Endothelial cell of umbilical vein (primary cell): ENCODE measurements at regions of chr3 and their contacts with region 1.

Region 1: GRCh38 chr3:177284383-177284881 is 87.2 kb upstream of the TBL1XR1 start:
- DNase-seq: no peak
- H3K4me3 ChIP-seq: no peak overlapping the region
- H3K27ac ChIP-seq: no peak overlapping the region
- H3K4me1 ChIP-seq: no peaks in the 10 kb centered on the region
- H3K27me3 ChIP-seq: no peaks in the 10 kb centered on the region
- CTCF ChIP-seq: no peak
- POLR2A ChIP-seq: no peak

Region 2: GRCh38 chr3:176953106-176954060 is 331.0 kb before region 1 on chr3:
- CTCF ChIA-PET with region 1: no interaction called
- POLR2A ChIA-PET with region 1: no interaction called
- dilution Hi-C with region 1: no loop called
- intact Hi-C with region 1: loop called (anchors 5 kb)
- DNase-seq: no peak
- H3K4me3 ChIP-seq: no peak overlapping the region
- H3K27ac ChIP-seq: no peak overlapping the region
- H3K4me1 ChIP-seq: no peaks in the 10 kb centered on the region
- H3K27me3 ChIP-seq: no peaks in the 10 kb centered on the region
- CTCF ChIP-seq: no peak
- POLR2A ChIP-seq: no peak